A673 (cell line): ENCODE measurements at regions of chr12 and their contacts with region 1.

Region 1: GRCh38 chr12:108394196-108394595 is 55.1 kb upstream of the CMKLR1 start:
- DNase-seq: no peak
- H3K4me3 ChIP-seq: no peak overlapping the region
- H3K27ac ChIP-seq: no peak overlapping the region
- H3K4me1 ChIP-seq: no peaks in the 10 kb centered on the region
- H3K27me3 ChIP-seq: no peaks in the 10 kb centered on the region
- CTCF ChIP-seq: no peak

Region 2: GRCh38 chr12:108646600-108647579 is 252.7 kb after region 1 on chr12:
- CTCF ChIA-PET with region 1: interaction called, 10 read pairs
- POLR2A ChIA-PET with region 1: no interaction called
- intact Hi-C with region 1: no loop called
- DNase-seq: no peak
- H3K4me3 ChIP-seq: no peak overlapping the region
- H3K27ac ChIP-seq: no peak overlapping the region
- H3K4me1 ChIP-seq: no peaks in the 10 kb centered on the region
- H3K27me3 ChIP-seq: no peaks in the 10 kb centered on the region
- CTCF ChIP-seq: 0 out of 2 replicates have a peak, but pooled peaks have one; percentile 9